Calu3 (cell line): ENCODE measurements at regions of chr18 and their contacts with region 1.

Region 1: DNA sequence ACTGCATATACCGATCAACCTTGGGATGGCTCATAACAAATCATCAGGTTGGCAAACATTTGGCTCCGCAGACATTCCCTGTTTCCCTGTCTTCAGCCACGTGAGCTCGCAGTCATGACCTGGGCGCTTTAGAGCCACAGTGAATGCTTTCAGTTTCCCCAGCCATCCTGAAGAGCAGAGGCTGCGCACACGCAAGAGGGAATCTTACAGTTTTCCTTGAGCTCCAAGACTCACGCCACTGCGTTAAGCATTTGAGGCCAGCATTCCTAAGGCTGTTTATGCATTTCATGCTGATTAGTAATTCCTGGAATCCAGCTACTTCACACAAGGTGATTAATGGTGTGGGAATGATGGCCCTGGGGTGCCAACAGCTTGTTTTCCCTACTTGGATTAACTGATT is 95.1 kb downstream of the MTCL1 start:
- DNase-seq: peak; percentile 37
- H3K4me3 Mint-ChIP-seq: no peak overlapping the region
- H3K27ac Mint-ChIP-seq: peak overlapping the region; percentile 94
- H3K4me1 Mint-ChIP-seq: peaks cover 80% of the 10 kb centered on the region
- H3K27me3 Mint-ChIP-seq: no peaks in the 10 kb centered on the region
- CTCF ChIP-seq: no peak

Region 2: GRCh38 chr18:8730080-8730827 is 70.2 kb before region 1 on chr18:
- CTCF ChIA-PET with region 1: no interaction called
- intact Hi-C with region 1: loop called (anchors 2 kb)
- DNase-seq: peak; percentile 80
- H3K4me3 Mint-ChIP-seq: peak overlapping the region; percentile 65
- H3K27ac Mint-ChIP-seq: peak overlapping the region; percentile 98
- H3K4me1 Mint-ChIP-seq: peaks cover 77% of the 10 kb centered on the region
- H3K27me3 Mint-ChIP-seq: no peaks in the 10 kb centered on the region
- CTCF ChIP-seq: no peak

Region 3: GRCh38 chr18:8786478-8787370 is 13.7 kb before region 1 on chr18:
- CTCF ChIA-PET with region 1: no interaction called
- intact Hi-C with region 1: no loop called
- DNase-seq: no peak
- H3K4me3 Mint-ChIP-seq: no peak overlapping the region
- H3K27ac Mint-ChIP-seq: no peak overlapping the region
- H3K4me1 Mint-ChIP-seq: peaks cover 31% of the 10 kb centered on the region
- H3K27me3 Mint-ChIP-seq: no peaks in the 10 kb centered on the region
- CTCF ChIP-seq: no peak

Region 4: DNA sequence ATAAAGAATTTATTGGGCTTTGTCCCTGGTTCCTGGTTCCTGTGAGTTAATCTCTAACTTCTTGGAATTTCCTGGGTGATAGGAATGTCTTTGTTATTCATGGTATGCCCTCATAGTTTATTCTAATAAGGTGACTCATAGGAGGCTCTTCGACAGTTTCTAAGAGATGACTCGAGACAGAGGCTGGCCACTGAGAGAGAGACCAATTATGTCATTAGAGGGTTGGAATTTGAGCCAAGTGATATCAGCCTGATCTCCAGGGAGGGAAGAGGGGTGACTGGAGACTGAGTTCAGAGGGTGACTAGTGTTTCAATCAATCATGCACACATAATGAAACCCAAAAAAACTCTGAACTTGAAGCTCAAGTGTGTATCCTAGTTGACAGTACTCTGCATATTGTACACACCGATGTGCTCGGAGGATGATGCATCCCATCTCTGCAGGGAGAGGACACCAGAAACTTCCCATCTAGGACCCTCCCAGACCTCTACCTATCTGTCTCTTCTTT is 90.6 kb after region 1 on chr18:
- CTCF ChIA-PET with region 1: interaction called, 3 read pairs
- intact Hi-C with region 1: loop called (anchors 5 kb)
- DNase-seq: peak; percentile 75
- H3K4me3 Mint-ChIP-seq: peak overlapping the region; percentile 48
- H3K27ac Mint-ChIP-seq: peak overlapping the region; percentile 92
- H3K4me1 Mint-ChIP-seq: peaks cover 45% of the 10 kb centered on the region
- H3K27me3 Mint-ChIP-seq: no peaks in the 10 kb centered on the region
- CTCF ChIP-seq: no peak